ENCODE measurements at regions of chr9 and their contacts with region 1.

Region 1: DNA sequence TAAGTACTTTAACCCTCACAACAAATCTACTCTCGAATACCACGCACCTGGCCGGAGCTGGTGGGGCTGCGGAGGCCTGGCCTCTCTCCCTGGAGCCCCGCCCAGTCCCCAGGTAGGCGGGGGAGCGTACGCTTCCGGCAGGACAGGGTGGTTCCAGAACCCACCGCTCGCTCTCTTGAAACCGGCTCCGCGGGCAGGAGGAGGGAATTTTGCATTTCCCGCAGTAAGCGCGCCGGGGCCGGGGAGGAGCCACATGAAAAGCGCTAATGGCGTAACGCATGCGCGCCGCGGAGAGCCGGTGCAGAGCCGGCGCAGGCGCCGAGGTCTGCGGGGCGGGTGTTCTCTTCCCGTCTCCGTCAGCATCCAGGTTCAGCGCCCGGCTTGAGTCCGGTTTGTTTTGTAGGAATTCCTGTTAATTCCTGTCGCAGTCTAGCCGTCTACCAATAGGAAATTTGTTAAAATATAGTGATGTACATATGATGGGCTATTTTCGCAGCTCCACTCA is 20.8 kb downstream of the CAVIN4 start:
- DNase-seq: peak; percentile 91
- ATAC-seq: peak; percentile 76

Region 2: DNA sequence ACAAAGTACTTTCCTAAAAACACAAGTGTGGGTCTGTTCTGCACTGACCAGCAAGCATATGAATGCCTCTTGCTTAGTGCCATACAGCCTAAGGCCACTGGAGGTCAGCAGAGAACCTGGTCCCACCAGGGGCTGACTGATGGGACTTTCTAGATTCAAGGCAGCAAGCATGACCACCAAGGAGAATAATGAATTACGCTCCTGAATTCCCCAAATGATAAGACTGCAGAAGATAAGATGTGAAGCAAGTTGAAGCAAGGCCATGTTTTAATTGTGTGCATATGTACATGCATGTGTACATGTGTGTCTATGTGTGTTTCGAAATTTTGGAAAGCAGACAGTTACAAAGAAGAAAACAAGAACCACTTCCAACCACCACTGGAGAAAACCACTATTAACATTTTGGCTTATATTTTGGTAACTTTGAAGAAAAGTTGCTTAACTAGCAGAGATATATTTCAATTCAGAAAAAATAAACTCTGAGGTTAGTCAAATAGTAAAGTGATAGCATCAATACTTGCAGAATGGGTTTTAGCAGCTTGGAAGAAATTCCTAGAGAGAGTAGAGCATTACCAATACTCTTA is 570.4 kb before region 1 on chr9:
- intact Hi-C with region 1: loop called (anchors 5 kb)
- DNase-seq: no peak
- ATAC-seq: peak; percentile 93

Region 3: GRCh38 chr9:100322954-100323536 is 275.6 kb before region 1 on chr9:
- intact Hi-C with region 1: loop called (anchors 5 kb)
- DNase-seq: no peak
- ATAC-seq: no peak

Region 4: GRCh38 chr9:100449420-100449819 is 149.3 kb before region 1 on chr9:
- intact Hi-C with region 1: loop called (anchors 5 kb)
- DNase-seq: no peak
- ATAC-seq: no peak

Region 5: DNA sequence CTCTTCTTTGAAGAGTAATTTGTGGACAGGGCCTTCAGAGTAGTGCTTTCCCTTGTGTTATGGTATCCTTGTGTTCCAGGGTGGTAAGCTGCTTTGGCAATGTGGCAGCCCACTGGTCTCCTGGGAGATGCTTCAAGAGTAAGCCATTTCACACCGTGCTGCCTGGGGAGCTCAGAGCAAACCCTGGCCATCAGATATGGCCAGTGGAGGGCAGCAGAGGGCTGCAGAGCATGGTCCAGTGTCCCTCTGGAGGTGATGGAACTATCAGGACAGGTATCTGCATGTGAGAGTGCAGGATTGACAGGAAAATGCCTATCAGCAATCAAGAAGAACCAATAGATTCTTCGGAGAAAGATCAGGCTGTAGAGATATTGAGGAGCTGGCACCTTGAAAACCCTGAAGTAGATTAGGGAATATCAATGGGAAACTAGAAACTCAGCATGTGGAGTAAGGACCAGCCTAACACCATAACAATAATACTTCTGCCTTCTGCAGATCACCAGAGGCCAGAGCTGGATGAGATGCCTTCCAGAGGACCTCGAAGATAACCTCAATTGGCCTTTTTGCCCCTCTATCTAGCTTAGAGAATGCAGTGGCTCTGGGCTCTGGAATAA is 520.6 kb after region 1 on chr9:
- intact Hi-C with region 1: loop called (anchors 5 kb)
- DNase-seq: peak; percentile 30
- ATAC-seq: no peak

Measured in Right ventricle myocardium inferior (tissue), 1 donor.